Thyroid gland (tissue), 4 donors: ENCODE measurements at regions of chr3 and their contacts with region 1.

Region 1: DNA sequence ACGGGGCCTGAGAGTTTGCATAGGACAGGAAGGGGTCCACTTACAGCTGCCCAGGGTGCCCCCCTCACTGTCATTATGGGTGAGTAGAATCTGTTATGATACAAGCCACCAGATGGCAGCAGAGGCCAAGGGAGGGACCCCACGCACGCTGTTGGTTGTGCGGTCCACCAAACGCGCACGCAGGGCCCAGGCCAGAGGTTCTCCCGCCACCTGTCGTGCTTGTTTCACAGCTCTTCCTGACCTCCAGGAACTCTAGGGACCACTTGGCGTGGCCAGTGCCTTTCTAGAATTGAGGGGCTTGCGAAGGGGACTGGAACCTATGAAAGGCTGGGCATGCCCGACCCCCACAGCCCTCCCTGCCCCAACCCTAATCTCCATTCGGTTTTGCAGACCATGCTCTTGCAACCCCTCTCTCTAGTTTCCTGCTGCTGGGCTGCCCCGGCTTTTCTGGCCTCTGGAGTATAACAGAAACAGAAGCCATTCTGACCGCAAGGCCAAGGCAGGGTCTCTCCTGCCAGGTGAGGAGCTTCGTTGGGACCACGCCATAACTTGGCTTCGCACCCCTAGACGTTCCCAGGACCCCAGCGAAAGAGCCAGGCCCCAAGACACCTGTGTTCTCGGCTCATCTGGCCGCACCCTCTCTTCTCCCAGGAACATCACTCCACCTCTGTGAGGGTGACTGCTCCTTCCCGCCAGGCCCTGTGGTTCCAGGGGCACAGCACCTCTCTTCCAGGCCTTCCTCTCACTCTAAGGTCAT is 46.0 kb downstream of the ALDH1L1 start:
- DNase-seq: peak; percentile 56 to 57
- H3K4me3 ChIP-seq: no peak overlapping the region
- H3K27ac ChIP-seq: no peak overlapping the region
- H3K4me1 ChIP-seq: no peaks in the 10 kb centered on the region
- H3K27me3 ChIP-seq: no peaks in the 10 kb centered on the region
- CTCF ChIP-seq: peak; percentile 61 to 82 (median 70)
- POLR2A ChIP-seq: no peak

Region 2: GRCh38 chr3:126197854-126198584 is 63.6 kb after region 1 on chr3:
- intact Hi-C with region 1: loop called (anchors 10 kb)
- DNase-seq: peak; percentile 77 to 78
- H3K4me3 ChIP-seq: no peak overlapping the region
- H3K27ac ChIP-seq: no peak overlapping the region
- H3K4me1 ChIP-seq: no peaks in the 10 kb centered on the region
- H3K27me3 ChIP-seq: no peaks in the 10 kb centered on the region
- CTCF ChIP-seq: peak; percentile 31 to 72 (median 54)
- POLR2A ChIP-seq: no peak

Region 3: DNA sequence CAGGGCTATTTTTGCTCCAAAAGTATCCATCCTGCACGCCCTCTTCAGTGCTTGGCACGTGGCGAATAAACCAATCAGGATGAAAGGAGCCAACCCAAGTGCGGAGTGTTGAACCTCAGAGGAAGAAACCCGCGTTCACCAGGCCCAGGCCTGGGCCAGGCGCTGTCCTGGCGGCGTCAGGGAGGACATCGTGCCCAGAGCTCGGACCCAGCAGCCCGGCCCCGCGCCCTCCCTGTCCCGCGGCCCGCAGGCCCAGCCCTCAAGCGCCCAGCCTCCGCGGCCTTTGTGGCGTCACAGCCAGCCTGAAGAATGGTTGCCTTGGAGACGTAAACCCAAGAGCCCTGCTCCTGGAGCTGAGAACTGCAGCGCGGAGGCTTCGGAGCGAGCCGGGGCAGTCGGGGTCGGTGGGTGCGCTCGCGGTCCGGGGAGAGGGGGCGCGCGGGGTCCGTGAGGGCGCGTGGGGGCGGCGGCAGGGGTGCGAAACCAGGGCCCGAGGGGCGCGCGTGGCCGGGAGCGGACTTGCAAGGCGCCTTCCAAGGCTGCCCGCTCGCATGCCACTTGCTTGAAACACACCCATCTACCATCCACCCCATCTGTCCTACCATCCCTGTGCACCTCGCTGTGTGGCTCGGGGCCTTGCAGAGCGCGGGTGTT is 260.3 kb after region 1 on chr3 and contains the start of gene CFAP100:
- intact Hi-C with region 1: loop called (anchors 5 kb)
- DNase-seq: peak; percentile 54 to 62
- H3K4me3 ChIP-seq: peak within 1 kb of the TSS in 1 of 3 donors; percentile 9
- H3K27ac ChIP-seq: no peak within 1 kb of the TSS
- H3K4me1 ChIP-seq: peaks cover 0 to 9% of the 10 kb centered on the region in 2 donors
- H3K27me3 ChIP-seq: no peaks in the 10 kb centered on the region
- CTCF ChIP-seq: no peak
- POLR2A ChIP-seq: no peak
- total RNA-seq, gene CFAP100: not detected